Gastrocnemius medialis (tissue), 4 donors: ENCODE measurements at regions of chr10 and their contacts with region 1.

Region 1: GRCh38 chr10:132443605-132443982 is 46.6 kb downstream of the PWWP2B start:
- DNase-seq: no peak
- ATAC-seq: no peak
- H3K4me3 ChIP-seq: no peak overlapping the region
- H3K27ac ChIP-seq: no peak overlapping the region
- H3K4me1 ChIP-seq: peaks cover 0 to 11% of the 10 kb centered on the region in 2 donors
- H3K27me3 ChIP-seq: no peaks in the 10 kb centered on the region
- CTCF ChIP-seq: peak in 2 of 5 experiments; percentile 8 to 20
- POLR2A ChIP-seq: no peak

Region 2: DNA sequence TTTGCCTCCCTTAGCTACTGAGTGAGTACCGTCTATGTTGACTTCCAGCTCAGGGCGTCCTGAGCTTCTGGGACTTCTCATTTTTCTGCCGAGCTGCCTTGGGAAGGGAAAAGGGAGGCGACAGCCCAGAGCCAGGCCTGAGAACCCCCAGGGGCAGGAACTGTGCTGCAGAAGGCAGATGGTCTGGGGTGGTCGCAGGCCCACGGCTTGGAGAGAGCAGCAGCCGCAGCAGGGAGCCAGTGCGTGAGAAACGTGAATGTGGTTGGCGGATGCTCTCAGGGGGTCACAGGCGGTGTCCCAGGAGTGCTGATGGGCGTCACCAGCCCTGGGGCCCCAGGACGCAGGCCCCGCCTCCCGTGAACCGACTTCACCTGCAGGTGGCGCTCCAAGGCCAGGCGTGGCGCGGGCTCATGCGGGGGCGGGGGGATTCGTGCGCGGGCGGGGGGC is 55.8 kb before region 1 on chr10:
- in situ Hi-C with region 1: loop called in 1 of 4 experiments (anchors 5 kb)
- intact Hi-C with region 1: no loop called
- DNase-seq: peak in 1 of 2 donors; percentile 48
- ATAC-seq: peak in 1 of 2 donors; percentile 45
- H3K4me3 ChIP-seq: no peak overlapping the region
- H3K27ac ChIP-seq: peak overlapping the region in 2 of 4 donors; percentile 26 to 57
- H3K4me1 ChIP-seq: peaks cover 0 to 10% of the 10 kb centered on the region in 2 donors
- H3K27me3 ChIP-seq: no peaks in the 10 kb centered on the region
- CTCF ChIP-seq: peak; percentile 48 to 81 (median 74)
- POLR2A ChIP-seq: no peak